Posterior cingulate gyrus (tissue), 11 donors: ENCODE measurements at regions of chr6 and their contacts with region 1.

Region 1: DNA sequence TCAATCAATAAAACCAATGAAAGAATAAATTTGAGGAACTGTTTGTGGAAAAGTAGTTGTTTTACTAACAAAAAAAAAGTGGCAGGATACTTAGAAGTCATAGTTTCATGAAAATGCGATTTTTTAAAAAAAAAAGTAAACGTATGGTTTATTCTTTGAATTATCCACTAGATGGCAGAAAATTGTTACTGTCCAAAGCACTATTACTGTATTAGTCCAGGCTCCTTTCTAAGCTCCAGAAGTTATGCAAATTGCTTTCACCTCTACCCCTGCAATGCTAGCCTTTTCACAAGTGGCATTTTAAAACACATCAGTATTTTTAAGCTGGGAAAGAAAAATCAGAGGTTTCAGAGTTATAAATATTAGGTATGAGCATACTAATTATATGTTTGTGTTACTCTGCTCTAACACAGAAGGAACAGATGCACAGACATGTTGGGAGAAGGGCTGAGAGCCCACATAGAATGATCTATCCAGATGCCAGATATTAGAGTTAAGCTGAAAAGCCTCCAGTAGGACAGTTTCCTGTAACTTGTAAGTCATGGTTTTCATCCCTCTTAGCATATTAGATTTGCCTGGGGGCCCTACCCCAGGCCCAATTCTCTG is 63.9 kb downstream of the FHL5 start:
- DNase-seq: no peak

Region 2: DNA sequence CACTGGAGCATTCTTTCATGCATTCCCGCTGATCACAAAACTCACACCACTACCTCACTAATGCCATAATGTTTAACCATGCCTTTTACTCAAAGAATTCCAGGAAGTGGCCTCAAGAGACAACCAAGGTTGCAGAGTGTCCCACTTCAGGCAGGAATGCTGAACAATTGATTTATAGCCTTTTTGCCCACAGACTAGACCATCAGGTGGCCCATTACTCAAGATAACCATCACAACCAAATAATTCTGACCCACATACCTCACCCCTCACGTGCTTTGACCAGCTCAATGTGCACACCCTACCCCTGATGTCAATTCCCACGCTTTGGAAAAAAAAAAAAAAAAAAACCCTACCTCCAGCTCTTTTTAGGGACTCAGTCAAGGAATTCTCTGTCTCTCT is 325.8 kb before region 1 on chr6:
- intact Hi-C with region 1: no loop called
- DNase-seq: no peak

Region 3: DNA sequence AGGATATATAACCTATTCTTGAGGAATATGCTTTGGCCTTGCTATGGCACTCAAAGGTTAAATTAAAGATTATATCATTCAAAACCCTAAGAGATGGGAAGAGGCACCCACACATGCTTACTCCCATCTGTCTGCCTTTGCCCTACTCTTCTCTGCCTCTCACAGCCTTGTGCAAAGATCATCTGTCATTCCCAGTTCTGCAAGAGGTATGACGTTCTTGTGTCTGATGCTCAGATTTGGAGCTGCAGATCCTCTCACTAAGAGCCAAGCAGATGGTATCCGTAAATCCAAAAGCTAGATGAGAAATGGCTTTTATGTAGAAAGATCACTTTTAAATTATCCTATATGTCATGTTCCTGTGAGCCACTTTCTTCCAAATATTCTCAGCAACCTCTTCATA is 98.4 kb after region 1 on chr6:
- intact Hi-C with region 1: no loop called
- DNase-seq: no peak

Region 4: DNA sequence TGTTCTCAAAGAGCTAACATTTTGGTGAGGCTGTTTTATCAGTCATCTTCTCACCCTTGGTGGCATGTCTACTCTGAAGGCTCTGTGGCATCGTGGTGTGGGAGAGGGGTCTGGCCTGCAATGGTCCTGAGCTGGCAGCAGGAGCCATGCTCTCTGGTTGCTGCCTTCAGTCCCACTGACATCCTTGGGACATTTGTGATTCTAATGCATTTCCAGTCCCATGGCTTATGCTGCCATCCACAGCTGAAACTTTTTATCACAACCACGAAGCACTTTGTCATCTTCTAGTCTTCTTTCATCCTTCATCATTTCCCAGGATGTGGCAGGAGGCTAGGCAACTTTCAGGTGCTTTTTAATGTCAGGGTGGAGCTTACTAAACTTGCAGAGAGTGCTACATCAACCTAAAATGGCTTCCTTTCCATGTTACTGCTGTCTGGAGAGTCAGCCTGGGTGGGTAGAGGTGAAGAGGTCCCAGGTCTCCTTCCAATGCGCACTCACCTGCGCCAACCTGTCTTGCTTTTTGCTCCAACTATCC is 133.4 kb after region 1 on chr6:
- intact Hi-C with region 1: loop called (anchors 2 kb)
- DNase-seq: no peak

Region 5: GRCh38 chr6:96878143-96878542 is 251.3 kb after region 1 on chr6:
- intact Hi-C with region 1: loop called (anchors 5 kb)
- DNase-seq: no peak

Region 6: DNA sequence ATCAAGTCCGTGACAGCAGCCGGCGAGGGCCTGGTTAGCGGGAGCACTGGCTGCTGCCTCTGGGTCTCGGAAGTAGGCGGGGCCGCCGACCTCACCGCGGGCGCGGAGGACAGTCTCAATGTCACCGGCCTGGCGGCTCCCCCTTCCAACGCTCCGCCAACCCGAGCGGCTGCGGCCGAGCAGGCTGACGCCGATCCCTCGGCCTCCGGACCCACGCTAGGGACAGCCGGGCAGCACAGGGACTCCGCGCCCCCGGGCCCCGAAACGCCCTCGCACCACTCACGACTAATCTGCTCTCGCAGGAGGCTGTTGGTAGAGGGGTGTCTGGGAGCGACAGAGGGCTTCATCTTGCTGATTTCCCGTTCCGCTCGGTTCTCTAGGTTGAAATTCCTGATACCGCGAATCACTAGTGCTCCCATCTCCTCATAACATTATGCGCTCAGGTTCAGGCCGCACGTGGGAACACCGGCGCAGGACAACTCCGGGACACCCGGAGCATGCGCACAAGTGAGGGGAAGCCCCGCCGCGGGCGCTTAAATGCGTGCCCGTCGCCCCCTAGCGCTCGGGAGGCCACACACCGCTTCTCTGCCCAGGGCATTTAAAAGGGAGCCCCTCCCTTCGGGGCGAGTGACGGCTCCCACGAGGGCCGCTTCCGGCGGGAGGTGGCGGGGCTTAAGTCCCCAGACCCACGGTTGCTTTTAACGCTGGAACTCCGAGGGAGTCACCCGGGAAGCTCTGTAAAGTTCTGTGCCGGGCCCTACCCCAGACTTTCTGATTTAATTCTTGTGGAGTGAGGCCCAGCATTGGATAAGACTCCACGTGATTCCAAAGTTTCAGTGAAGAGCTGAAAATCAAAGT is 270.8 kb after region 1 on chr6 and contains the start of gene NDUFAF4:
- intact Hi-C with region 1: loop called (anchors 5 kb)
- DNase-seq: peak; percentile 88 to 99 (median 94)

Region 7: GRCh38 chr6:97068211-97068610 is 441.3 kb after region 1 on chr6:
- intact Hi-C with region 1: loop called (anchors 5 kb)
- DNase-seq: peak in 1 of 10 donors; percentile 22